Naive thymus-derived CD4-positive, alpha-beta T cell (primary cell): ENCODE measurements at regions of chr20 and their contacts with region 1.

Region 1: GRCh38 chr20:63911176-63911575 is 16.2 kb downstream of the DNAJC5 start:
- DNase-seq: no peak
- ATAC-seq: peak; percentile 53
- H3K4me3 ChIP-seq: no peak overlapping the region
- H3K4me3 Mint-ChIP-seq: peak overlapping the region in 4 of 10 donors; percentile 3 to 59 (median 30)
- H3K27ac ChIP-seq: no peak overlapping the region
- H3K27ac Mint-ChIP-seq: peak overlapping the region in 6 of 9 donors; percentile 3 to 78 (median 44)
- H3K4me1 ChIP-seq: peaks cover 7 to 17% of the 10 kb centered on the region in 2 donors
- H3K4me1 Mint-ChIP-seq: peaks cover 28 to 63% (median 41%) of the 10 kb centered on the region in 7 donors
- H3K27me3 ChIP-seq: no peaks in the 10 kb centered on the region
- H3K27me3 Mint-ChIP-seq: no peaks in the 10 kb centered on the region

Region 2: GRCh38 chr20:63894358-63895201 is 16.6 kb before region 1 on chr20 and contains the start of gene DNAJC5:
- CTCF ChIA-PET with region 1: interaction called, 8 read pairs
- POLR2A ChIA-PET with region 1: interaction called, 14 read pairs
- intact Hi-C with region 1: loop called in 1 of 2 experiments (anchors 2 kb)
- DNase-seq: peak; percentile 96 to 99 (median 98)
- ATAC-seq: peak; percentile 95
- H3K4me3 ChIP-seq: peak within 1 kb of the TSS; percentile 56
- H3K4me3 Mint-ChIP-seq: peak within 1 kb of the TSS; percentile 86 to 99 (median 96)
- H3K27ac ChIP-seq: peak within 1 kb of the TSS; percentile 94
- H3K27ac Mint-ChIP-seq: peak within 1 kb of the TSS; percentile 94 to 98 (median 97)
- H3K4me1 ChIP-seq: peaks cover 21% of the 10 kb centered on the region in 2 donors
- H3K4me1 Mint-ChIP-seq: peaks cover 34 to 49% (median 43%) of the 10 kb centered on the region in 7 donors
- H3K27me3 ChIP-seq: no peaks in the 10 kb centered on the region
- H3K27me3 Mint-ChIP-seq: peaks cover 0 to 2% (median 0%) of the 10 kb centered on the region in 5 donors
- total RNA-seq, gene DNAJC5: 35.5 to 56.8 (median 50.3) TPM

Region 3: GRCh38 chr20:63963348-63964301 is 52.4 kb after region 1 on chr20:
- CTCF ChIA-PET with region 1: no interaction called
- POLR2A ChIA-PET with region 1: no interaction called
- intact Hi-C with region 1: no loop called
- DNase-seq: peak in 1 of 9 donors; percentile 6
- ATAC-seq: no peak
- H3K4me3 ChIP-seq: no peak overlapping the region
- H3K4me3 Mint-ChIP-seq: no peak overlapping the region
- H3K27ac ChIP-seq: no peak overlapping the region
- H3K27ac Mint-ChIP-seq: no peak overlapping the region
- H3K4me1 ChIP-seq: peaks cover 3 to 4% of the 10 kb centered on the region in 2 donors
- H3K4me1 Mint-ChIP-seq: peaks cover 0 to 7% (median 7%) of the 10 kb centered on the region in 7 donors
- H3K27me3 ChIP-seq: no peaks in the 10 kb centered on the region
- H3K27me3 Mint-ChIP-seq: no peaks in the 10 kb centered on the region

Region 4: GRCh38 chr20:63973636-63974402 is 62.6 kb after region 1 on chr20:
- CTCF ChIA-PET with region 1: interaction called, 5 read pairs
- POLR2A ChIA-PET with region 1: no interaction called
- intact Hi-C with region 1: loop called (anchors 1 to 5 kb)
- DNase-seq: peak; percentile 59 to 89 (median 78)
- ATAC-seq: peak; percentile 81
- H3K4me3 ChIP-seq: no peak overlapping the region
- H3K4me3 Mint-ChIP-seq: peak overlapping the region in 5 of 10 donors; percentile 7 to 71 (median 36)
- H3K27ac ChIP-seq: peak overlapping the region; percentile 35
- H3K27ac Mint-ChIP-seq: peak overlapping the region; percentile 16 to 88 (median 71)
- H3K4me1 ChIP-seq: peaks cover 16 to 36% of the 10 kb centered on the region in 2 donors
- H3K4me1 Mint-ChIP-seq: peaks cover 34 to 63% (median 54%) of the 10 kb centered on the region in 7 donors
- H3K27me3 ChIP-seq: no peaks in the 10 kb centered on the region
- H3K27me3 Mint-ChIP-seq: peaks cover 0 to 2% (median 0%) of the 10 kb centered on the region in 5 donors

Region 5: GRCh38 chr20:64119681-64120341 is 208.6 kb after region 1 on chr20:
- CTCF ChIA-PET with region 1: no interaction called
- POLR2A ChIA-PET with region 1: interaction called, 3 read pairs
- intact Hi-C with region 1: loop called in 1 of 2 experiments (anchors 2 kb)
- DNase-seq: peak in 3 of 9 donors; percentile 2 to 24 (median 14)
- ATAC-seq: peak; percentile 18
- H3K4me3 ChIP-seq: peak overlapping the region; percentile 36
- H3K4me3 Mint-ChIP-seq: peak overlapping the region; percentile 39 to 80 (median 73)
- H3K27ac ChIP-seq: peak overlapping the region; percentile 22
- H3K27ac Mint-ChIP-seq: peak overlapping the region; percentile 69 to 85 (median 78)
- H3K4me1 ChIP-seq: peaks cover 5 to 9% of the 10 kb centered on the region in 2 donors
- H3K4me1 Mint-ChIP-seq: peaks cover 0 to 10% (median 8%) of the 10 kb centered on the region in 7 donors
- H3K27me3 ChIP-seq: no peaks in the 10 kb centered on the region
- H3K27me3 Mint-ChIP-seq: peaks cover 0 to 28% (median 0%) of the 10 kb centered on the region in 5 donors